T-cell (primary cell): ENCODE measurements at regions of chr1 and their contacts with region 1.

Region 1: DNA sequence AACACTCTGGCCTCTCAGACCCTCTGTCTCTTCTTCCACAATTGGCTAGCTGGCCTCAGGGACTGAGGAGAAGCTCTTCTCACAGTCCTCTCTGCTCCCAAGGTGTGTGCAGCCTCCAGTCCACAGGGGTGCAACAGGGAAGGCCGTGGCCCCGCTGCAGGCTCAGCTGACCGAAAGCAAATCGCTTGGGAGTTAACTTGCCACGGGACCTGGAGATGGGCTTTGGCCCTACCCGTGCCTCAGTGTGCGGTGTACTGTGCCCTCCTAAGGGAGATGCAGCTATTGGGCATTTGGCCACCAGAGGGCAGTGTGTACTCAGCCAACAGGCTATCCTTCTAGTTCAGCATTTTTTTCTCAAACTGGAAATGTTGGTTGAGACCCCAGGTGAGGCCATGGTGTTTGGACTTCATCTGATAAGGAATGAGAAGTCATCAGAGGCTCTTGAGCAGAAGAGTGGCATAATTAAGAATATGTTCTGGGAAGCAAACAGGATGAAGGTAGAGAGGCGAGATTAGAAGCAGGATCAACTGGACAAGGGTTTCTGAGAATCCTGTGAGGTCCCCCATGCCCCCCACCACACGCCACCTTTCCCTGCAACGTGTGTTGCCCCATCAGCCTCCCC is 42.5 kb upstream of the TMEM125 start:
- DNase-seq: peak; percentile 41 to 89 (median 77)
- ATAC-seq: peak; percentile 78 to 92 (median 84)
- H3K4me3 ChIP-seq: no peak overlapping the region
- H3K4me3 Mint-ChIP-seq: no peak overlapping the region
- H3K27ac ChIP-seq: no peak overlapping the region
- H3K27ac Mint-ChIP-seq: no peak overlapping the region
- H3K4me1 ChIP-seq: peaks cover 0 to 3% of the 10 kb centered on the region in 2 experiments
- H3K4me1 Mint-ChIP-seq: peaks cover 0 to 6% (median 0%) of the 10 kb centered on the region in 3 donors
- H3K27me3 ChIP-seq: peaks cover 0 to 19% of the 10 kb centered on the region in 2 experiments
- H3K27me3 Mint-ChIP-seq: peaks cover 0 to 5% of the 10 kb centered on the region in 2 donors

Region 2: DNA sequence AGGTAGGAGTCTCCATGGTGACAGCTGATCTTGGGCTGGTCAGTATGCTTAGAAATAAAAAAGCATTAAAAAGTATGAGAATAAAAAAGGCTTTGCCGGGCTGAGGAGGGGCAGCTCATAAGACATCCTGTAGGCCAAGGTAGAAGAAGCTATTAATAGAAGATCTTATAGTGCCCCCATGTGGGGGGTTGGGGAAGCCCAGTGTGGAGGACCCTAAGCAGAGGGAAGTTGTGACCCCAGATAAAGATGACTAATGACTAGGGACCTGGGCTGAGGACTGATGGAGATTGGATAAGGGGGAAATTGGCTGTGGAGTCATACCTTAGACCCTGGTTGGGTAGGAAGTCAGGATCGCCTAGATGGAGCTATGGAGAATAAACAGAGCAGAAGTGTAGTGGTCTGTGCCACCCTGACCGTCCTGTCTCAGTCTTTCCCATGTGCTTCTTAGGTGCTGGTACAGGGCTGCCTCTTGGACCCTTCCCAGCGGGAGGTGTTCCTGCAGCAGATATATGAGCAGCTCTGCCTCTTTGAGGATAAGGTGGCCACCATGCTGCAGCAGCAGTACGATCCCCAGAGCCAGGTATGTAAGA is 187.5 kb after region 1 on chr1:
- CTCF ChIA-PET with region 1: interaction called, 8 to 86 read pairs
- POLR2A ChIA-PET with region 1: interaction called in 1 of 2 experiments, 3 read pairs
- DNase-seq: peak; percentile 22 to 77 (median 55)
- ATAC-seq: peak; percentile 90 to 91 (median 90)
- H3K4me3 ChIP-seq: no peak overlapping the region
- H3K4me3 Mint-ChIP-seq: no peak overlapping the region
- H3K27ac ChIP-seq: no peak overlapping the region
- H3K27ac Mint-ChIP-seq: peak overlapping the region; percentile 11 to 40
- H3K4me1 ChIP-seq: no peaks in the 10 kb centered on the region
- H3K4me1 Mint-ChIP-seq: peaks cover 2 to 7% (median 2%) of the 10 kb centered on the region in 3 donors
- H3K27me3 ChIP-seq: no peaks in the 10 kb centered on the region
- H3K27me3 Mint-ChIP-seq: no peaks in the 10 kb centered on the region

Region 3: GRCh38 chr1:44347280-44347679 is 1120.0 kb after region 1 on chr1:
- CTCF ChIA-PET with region 1: no interaction called
- POLR2A ChIA-PET with region 1: no interaction called
- DNase-seq: no peak
- ATAC-seq: no peak
- H3K4me3 ChIP-seq: no peak overlapping the region
- H3K4me3 Mint-ChIP-seq: no peak overlapping the region
- H3K27ac ChIP-seq: no peak overlapping the region
- H3K27ac Mint-ChIP-seq: no peak overlapping the region
- H3K4me1 ChIP-seq: no peaks in the 10 kb centered on the region
- H3K4me1 Mint-ChIP-seq: peaks cover 33 to 55% (median 53%) of the 10 kb centered on the region in 3 donors
- H3K27me3 ChIP-seq: no peaks in the 10 kb centered on the region
- H3K27me3 Mint-ChIP-seq: no peaks in the 10 kb centered on the region